Aorta (tissue), 5 donors: ENCODE measurements at regions of chr7 and their contacts with region 1.

Region 1: GRCh38 chr7:35037526-35038339 is 448 bp upstream of the DPY19L1 start:
- DNase-seq: peak; percentile 96 to 98
- ATAC-seq: peak; percentile 96
- H3K4me3 ChIP-seq: peak overlapping the region; percentile 99 to 100
- H3K27ac ChIP-seq: peak overlapping the region in 1 of 2 donors; percentile 60
- H3K4me1 ChIP-seq: peaks cover 0 to 2% of the 10 kb centered on the region in 2 donors
- H3K27me3 ChIP-seq: no peaks in the 10 kb centered on the region

Region 2: DNA sequence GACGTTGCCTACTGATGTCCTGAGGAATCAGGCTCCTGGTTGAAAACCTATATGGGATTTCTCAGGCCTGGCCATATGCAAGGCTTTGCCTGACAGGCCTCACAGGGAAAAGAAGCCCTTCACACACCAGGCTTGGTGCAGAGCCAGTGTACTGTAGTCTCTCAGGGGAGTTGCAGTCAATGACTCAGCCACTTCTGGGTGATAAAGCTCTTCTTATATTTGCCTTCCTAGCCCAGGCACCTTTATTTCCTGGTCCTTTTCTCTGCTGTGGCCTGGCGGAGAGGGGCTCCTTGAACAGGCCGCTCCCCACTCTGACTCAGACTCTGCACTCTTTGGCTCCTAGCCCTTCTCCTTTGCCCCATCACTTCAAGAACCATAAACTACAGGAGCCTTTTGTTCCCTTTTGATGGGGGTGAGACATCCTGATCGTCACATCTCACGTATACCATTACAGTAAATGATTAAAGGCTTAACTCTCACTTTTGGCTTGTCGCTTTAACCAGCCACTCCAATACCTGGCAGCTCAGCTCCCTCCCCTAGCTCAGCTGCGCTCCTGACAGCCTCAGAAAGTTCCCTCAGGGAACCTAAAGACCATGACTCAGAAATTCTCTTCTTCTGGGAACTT is 33.9 kb before region 1 on chr7:
- intact Hi-C with region 1: loop called in 1 of 2 experiments (anchors 5 kb)
- DNase-seq: no peak
- ATAC-seq: peak; percentile 56
- H3K4me3 ChIP-seq: no peak overlapping the region
- H3K27ac ChIP-seq: no peak overlapping the region
- H3K4me1 ChIP-seq: peaks cover 0 to 2% of the 10 kb centered on the region in 2 donors
- H3K27me3 ChIP-seq: no peaks in the 10 kb centered on the region

Region 3: DNA sequence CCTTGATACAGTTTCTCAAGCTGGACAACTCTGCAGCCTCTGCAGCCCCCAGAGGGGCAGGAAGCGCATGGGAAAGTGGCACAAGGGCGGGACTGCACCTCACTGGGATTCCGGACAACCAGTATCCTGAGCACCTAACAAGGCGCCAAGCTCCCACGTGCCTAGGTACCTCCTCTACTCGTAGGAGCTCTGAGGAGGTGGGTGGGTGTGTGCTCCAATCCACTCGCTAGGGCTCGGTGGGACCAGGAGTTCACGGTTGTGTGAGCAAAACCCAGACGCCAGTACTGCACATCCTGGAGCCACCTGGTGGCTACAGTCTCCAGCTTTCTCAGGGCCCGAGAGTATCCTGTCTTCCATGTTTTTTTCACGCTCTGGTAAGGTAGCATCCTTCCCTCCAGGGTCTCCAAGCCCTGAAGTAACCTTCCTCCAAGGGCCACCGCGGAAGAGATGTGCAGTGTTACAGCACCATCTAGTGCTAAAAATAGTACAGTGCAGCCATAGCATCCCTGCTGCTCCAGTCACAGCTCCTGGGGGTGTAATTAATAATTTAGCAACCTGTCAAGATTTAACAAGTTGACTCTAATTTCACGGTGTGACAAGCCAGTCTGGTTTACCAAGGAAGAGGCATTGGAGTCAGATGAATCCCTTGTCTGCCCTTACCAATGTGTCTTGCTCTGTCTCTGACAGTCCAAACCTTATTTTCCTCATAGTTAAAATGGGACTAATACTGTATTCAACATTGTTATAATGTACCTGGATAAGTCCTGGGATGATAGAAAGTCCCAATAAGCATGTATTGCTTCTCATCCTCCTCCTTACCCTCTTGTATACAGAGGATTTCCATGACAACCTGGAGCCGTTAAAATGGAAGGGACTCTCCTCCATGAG is 586.8 kb after region 1 on chr7:
- intact Hi-C with region 1: loop called in 1 of 2 experiments (anchors 10 kb)
- DNase-seq: no peak
- ATAC-seq: peak; percentile 67
- H3K4me3 ChIP-seq: no peak overlapping the region
- H3K27ac ChIP-seq: no peak overlapping the region
- H3K4me1 ChIP-seq: no peaks in the 10 kb centered on the region
- H3K27me3 ChIP-seq: no peaks in the 10 kb centered on the region